ENCODE measurements at regions of chr12 and their contacts with region 1.

Region 1: GRCh38 chr12:32312049-32312670 is 87.2 kb upstream of the FGD4 start:
- DNase-seq: no peak
- H3K4me3 ChIP-seq: no peak overlapping the region
- H3K27ac ChIP-seq: peak overlapping the region in 3 of 8 donors; percentile 23 to 36 (median 31)
- H3K4me1 ChIP-seq: peaks cover 0 to 12% (median 3%) of the 10 kb centered on the region in 6 donors
- H3K27me3 ChIP-seq: no peaks in the 10 kb centered on the region
- CTCF ChIP-seq: peak; percentile 20 to 77 (median 50)
- POLR2A ChIP-seq: no peak

Region 2: DNA sequence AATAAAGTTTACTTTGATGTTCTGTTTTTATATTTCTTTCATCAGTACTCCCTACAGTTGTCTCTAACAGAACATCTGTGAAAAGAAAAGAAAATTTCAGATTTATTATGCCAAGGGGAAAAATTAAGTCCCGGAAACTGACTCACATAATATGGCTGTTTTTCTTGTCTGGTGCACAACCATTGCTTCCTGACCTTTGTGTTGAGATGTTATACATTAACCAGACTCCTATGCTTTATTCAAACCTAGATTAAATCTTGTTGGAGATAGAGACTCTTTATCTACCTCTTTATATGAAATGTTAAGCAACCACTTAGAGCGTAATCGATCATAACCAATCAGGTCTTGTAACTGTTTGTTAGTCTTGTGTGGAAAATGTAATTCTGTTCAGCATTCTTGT is 243.1 kb before region 1 on chr12:
- intact Hi-C with region 1: loop called (anchors 10 kb)
- DNase-seq: no peak
- H3K4me3 ChIP-seq: no peak overlapping the region
- H3K27ac ChIP-seq: no peak overlapping the region
- H3K4me1 ChIP-seq: no peaks in the 10 kb centered on the region
- H3K27me3 ChIP-seq: no peaks in the 10 kb centered on the region
- CTCF ChIP-seq: no peak
- POLR2A ChIP-seq: no peak

Measured in spleen (tissue), 13 donors.